ENCODE measurements at regions of chr6 and their contacts with region 1.

Region 1: DNA sequence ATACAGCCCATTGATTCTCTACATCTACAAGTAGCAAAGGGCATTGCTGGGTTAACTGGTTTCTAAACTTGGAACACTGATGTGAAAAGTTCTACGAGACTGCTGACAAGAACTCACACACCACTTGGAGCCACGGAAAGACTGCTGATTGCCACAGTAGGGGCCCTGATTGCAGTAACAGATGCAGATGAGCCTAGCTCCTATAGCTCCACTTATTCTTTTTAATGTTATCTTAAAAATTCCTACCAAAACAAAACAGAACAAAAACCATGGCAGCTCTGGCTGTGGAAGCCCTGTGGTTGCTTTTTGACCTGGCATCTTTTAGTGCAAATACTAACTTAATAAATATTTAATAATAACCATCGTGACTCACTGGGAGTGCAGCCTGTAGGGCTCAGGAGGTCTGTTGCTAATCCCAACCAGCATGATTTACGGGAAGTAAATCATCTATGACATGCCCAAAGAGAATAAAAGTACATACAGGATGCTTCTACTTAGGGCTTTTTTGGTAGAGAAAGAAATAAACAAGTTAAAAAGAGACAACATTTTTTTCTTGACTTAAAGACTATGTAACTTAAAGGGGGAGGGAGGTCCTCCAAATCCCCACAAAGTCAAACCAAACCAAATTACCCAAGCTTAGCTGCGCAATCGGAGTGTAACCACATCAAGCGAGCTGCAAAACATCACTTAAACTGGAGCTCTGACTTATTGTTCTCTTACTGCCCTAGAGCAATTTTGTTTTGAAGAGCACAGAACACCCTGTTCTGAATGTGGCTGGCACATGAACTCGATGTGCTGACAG is 87.2 kb downstream of the FKBP5 start:
- DNase-seq: peak; percentile 41
- H3K4me3 Mint-ChIP-seq: peak overlapping the region; percentile 59
- H3K27ac Mint-ChIP-seq: peak overlapping the region; percentile 74
- H3K4me1 Mint-ChIP-seq: peaks cover 48% of the 10 kb centered on the region
- H3K27me3 Mint-ChIP-seq: no peaks in the 10 kb centered on the region

Region 2: GRCh38 chr6:35552285-35552917 is 49.1 kb before region 1 on chr6:
- intact Hi-C with region 1: no loop called
- DNase-seq: peak; percentile 41
- H3K4me3 Mint-ChIP-seq: no peak overlapping the region
- H3K27ac Mint-ChIP-seq: no peak overlapping the region
- H3K4me1 Mint-ChIP-seq: no peaks in the 10 kb centered on the region
- H3K27me3 Mint-ChIP-seq: peaks cover 8% of the 10 kb centered on the region

Region 3: GRCh38 chr6:35669451-35670045 is 68.0 kb after region 1 on chr6:
- intact Hi-C with region 1: loop called (anchors 5 kb)
- DNase-seq: no peak
- H3K4me3 Mint-ChIP-seq: peak overlapping the region; percentile 63
- H3K27ac Mint-ChIP-seq: peak overlapping the region; percentile 82
- H3K4me1 Mint-ChIP-seq: peaks cover 35% of the 10 kb centered on the region
- H3K27me3 Mint-ChIP-seq: no peaks in the 10 kb centered on the region

Region 4: DNA sequence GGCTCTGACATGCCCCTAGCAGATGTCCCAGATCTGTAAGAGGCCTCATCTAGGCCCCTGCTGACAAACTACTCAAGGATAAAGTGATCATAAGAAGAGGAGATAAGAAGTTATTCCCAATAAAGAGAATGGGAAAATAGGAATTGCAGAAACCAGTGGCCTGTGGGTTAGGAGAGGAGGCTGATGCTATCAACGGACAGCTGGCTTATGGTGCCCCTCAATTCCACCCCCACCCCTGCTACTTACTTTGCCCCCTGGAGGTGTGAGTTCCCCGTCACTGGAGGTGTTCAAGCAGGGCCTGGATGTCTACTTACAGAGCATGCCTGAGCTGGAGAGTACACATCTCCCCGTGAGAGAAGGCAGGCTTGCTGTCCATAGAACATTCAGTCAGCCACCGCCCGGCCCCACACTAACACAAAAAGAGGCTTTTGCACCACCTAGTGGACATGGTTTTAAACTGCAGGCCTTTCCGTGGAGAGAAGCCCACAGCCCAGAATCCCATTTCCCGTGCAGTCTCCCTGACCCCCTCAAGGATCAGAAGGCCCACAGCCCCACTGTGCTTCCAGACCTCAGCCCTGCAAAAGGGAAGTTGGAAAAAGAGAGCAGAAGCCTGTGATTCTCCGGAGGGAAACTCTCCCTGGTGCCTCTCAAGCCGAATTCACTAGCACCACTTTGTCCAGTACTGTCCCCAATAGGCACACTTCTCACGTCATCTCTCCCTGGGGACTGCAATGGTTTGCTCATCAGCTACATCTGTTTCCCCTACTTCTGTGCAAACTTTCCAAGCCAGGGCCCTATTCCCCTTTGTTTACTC is 758.9 kb after region 1 on chr6:
- intact Hi-C with region 1: no loop called
- DNase-seq: peak; percentile 59
- H3K4me3 Mint-ChIP-seq: no peak overlapping the region
- H3K27ac Mint-ChIP-seq: no peak overlapping the region
- H3K4me1 Mint-ChIP-seq: peaks cover 38% of the 10 kb centered on the region
- H3K27me3 Mint-ChIP-seq: peaks cover 25% of the 10 kb centered on the region

Measured in activated T-helper 2 cell treated with anti-CD3 and anti-CD28 coated beads, Interferon-gamma antibody, Interleukin-2, Interleukin-4, amounts not matched to agents 10 μg/mL and 5 μg/mL and 100 μg/mL, durations not matched to agents 14 hours and 24 hours and 36 hours (primary cell).